Posterior cingulate gyrus (tissue), 11 donors: ENCODE measurements at regions of chr1 and their contacts with region 1.

Region 1: GRCh38 chr1:31762726-31763670 is 1.1 kb downstream of the ADGRB2 start:
- DNase-seq: peak; percentile 67 to 98 (median 80)

Region 2: GRCh38 chr1:31959521-31960340 is 196.7 kb after region 1 on chr1:
- intact Hi-C with region 1: loop called (anchors 5 kb)
- DNase-seq: no peak